K562 (cell line): ENCODE measurements at regions of chr1 and their contacts with region 1.

Region 1: GRCh38 chr1:185317034-185317885 is at the start of gene IVNS1ABP:
- DNase-seq: peak; percentile 97 to 98 (median 98)
- ATAC-seq: peak; percentile 79
- H3K4me3 ChIP-seq: peak within 1 kb of the TSS; percentile 77
- H3K27ac ChIP-seq: peak within 1 kb of the TSS; percentile 97
- H3K4me1 ChIP-seq: peaks cover 20 to 38% of the 10 kb centered on the region in 2 experiments
- H3K27me3 ChIP-seq: no peaks in the 10 kb centered on the region
- CTCF ChIP-seq: peak; percentile 24 to 62 (median 42); a peak in 5 of 6 replicates
- EP300 ChIP-seq: peak; percentile 45
- POLR2A ChIP-seq: peak; percentile 97
- RAD21 ChIP-seq: peak; percentile 47 to 58
- polyA plus RNA-seq, gene IVNS1ABP: 30.6 to 77.7 TPM

Region 2: DNA sequence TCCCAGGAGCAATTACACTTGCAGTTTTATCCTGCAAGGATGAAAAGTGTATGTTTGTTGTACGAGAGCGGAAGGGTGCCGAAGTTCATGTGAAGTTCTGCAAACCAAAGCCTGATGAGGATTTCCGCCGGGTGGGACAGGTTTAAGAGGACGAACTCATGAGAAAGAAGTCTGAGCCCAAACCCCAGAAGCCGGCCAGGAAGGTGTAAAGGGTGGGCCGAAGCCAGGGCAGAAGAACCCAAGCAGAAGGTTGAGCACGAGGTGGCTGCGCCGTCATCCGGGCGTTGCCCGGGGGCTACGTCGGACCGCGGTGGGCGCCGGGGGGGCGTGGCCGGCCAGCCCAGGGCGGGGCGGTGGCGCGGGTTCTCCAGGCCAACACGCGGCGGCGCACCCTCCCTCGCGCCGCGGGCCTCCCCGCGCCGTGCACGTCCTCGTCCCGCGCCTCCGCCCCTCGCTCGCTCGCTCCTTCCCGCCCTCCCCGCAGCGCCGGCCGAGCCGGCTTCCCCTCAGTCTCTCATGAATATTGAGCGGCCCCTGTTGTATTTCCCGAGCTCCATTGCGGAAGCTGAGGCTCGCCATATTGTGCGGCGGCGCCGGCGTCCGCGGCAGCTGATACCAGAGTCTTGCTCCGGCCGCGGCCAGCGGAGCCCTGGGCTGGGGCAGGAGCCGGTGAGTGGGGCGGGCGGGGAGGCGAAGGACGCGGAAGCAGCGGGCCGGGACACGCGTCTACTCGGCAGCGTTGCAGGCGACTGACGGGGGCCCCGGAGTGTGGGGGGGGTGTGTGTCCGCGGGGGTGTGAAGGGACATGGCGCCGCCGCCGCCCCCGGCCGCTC is 272.1 kb before region 1 on chr1 and contains the start of gene RNF2:
- CTCF ChIA-PET with region 1: no interaction called
- POLR2A ChIA-PET with region 1: no interaction called
- in situ Hi-C with region 1: no loop called
- intact Hi-C with region 1: loop called (anchors 10 kb)
- DNase-seq: peak; percentile 92 to 94 (median 94)
- ATAC-seq: peak; percentile 94
- H3K4me3 ChIP-seq: peak within 1 kb of the TSS; percentile 85
- H3K27ac ChIP-seq: peak within 1 kb of the TSS; percentile 85
- H3K4me1 ChIP-seq: peaks cover 21 to 25% of the 10 kb centered on the region in 2 experiments
- H3K27me3 ChIP-seq: no peaks in the 10 kb centered on the region
- CTCF ChIP-seq: peak in 1 of 3 experiments; percentile 40; a peak in 1 of 6 replicates
- EP300 ChIP-seq: no peak
- POLR2A ChIP-seq: peak; percentile 79
- RAD21 ChIP-seq: peak in 1 of 2 experiments; percentile 45; a peak in 3 of 4 replicates
- polyA plus RNA-seq, gene RNF2: 7.1 to 7.9 TPM

Region 3: DNA sequence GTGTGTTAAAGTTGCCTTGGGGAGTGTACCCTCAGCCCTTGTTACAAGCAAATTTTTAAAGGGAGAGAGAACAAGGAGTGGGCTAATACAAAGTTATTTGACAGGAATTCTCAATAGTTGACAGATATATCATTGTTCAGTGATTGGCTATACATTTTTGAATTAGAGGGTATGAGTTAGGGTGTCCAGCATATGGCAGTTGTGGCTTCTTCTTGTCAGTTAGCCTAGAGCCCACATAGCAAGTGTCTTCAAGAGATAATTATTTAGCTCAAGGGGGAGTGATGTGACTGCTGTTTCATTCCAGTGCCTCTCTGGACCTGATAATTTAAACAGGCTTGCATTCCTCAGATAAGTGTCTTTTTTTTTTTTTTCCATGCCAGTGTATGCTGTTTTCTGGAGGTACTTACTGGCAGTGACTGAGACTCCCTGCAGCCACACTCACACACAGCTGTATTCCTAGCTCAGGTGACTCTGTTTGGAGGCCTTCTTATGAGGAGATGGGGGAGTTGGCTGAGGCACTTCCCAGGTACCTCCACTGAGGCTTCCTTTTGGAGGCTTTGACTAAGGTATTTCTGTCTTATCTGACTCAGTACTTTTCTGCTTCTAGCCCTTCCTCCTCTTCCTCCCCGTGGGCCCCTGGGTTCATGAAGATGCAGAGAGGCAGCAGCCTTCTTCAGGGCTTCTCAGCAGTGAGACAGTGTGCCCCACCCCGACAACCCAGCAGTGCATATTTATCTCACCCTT is 32.6 kb before region 1 on chr1:
- CTCF ChIA-PET with region 1: no interaction called
- POLR2A ChIA-PET with region 1: interaction called, 3 read pairs
- in situ Hi-C with region 1: no loop called
- intact Hi-C with region 1: loop called (anchors 2 kb)
- DNase-seq: peak; percentile 47 to 95 (median 65)
- ATAC-seq: peak; percentile 91
- H3K4me3 ChIP-seq: no peak overlapping the region
- H3K27ac ChIP-seq: peak overlapping the region; percentile 96
- H3K4me1 ChIP-seq: peaks cover 4 to 40% of the 10 kb centered on the region in 2 experiments; a peak in 3 of 5 replicates
- H3K27me3 ChIP-seq: no peaks in the 10 kb centered on the region
- CTCF ChIP-seq: no peak; a peak in 2 of 6 replicates
- EP300 ChIP-seq: peak; percentile 98
- POLR2A ChIP-seq: no peak
- RAD21 ChIP-seq: peak in 1 of 2 experiments; percentile 6; a peak in 2 of 4 replicates

Region 4: DNA sequence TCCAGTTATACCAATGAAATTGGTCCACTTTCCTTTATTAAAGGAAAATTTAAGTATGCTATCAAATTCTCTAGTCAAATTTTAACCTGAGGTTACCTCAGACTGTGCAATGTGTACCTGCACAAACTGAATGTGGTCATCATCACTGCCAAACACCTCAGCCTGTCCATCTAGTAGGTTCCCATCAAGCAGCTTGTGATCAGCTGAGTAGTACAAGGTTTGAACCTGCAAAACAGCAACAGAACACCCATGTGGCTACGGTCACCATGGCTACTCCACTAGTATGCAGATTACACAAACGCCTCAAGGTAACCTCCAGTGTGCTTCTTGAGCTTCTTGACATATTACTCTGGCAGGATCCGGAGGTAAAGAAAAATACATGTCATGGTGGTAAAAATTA is 11.8 kb before region 1 on chr1:
- CTCF ChIA-PET with region 1: no interaction called
- POLR2A ChIA-PET with region 1: interaction called, 30 read pairs
- in situ Hi-C with region 1: no loop called
- intact Hi-C with region 1: no loop called
- DNase-seq: no peak
- ATAC-seq: no peak; the same call in 2 of the 3 replicates
- H3K4me3 ChIP-seq: no peak overlapping the region
- H3K27ac ChIP-seq: no peak overlapping the region
- H3K4me1 ChIP-seq: no peaks in the 10 kb centered on the region
- H3K27me3 ChIP-seq: no peaks in the 10 kb centered on the region
- CTCF ChIP-seq: no peak
- EP300 ChIP-seq: no peak
- POLR2A ChIP-seq: 0 out of 2 replicates have a peak, but pooled peaks have one; percentile 23
- RAD21 ChIP-seq: no peak

Region 5: DNA sequence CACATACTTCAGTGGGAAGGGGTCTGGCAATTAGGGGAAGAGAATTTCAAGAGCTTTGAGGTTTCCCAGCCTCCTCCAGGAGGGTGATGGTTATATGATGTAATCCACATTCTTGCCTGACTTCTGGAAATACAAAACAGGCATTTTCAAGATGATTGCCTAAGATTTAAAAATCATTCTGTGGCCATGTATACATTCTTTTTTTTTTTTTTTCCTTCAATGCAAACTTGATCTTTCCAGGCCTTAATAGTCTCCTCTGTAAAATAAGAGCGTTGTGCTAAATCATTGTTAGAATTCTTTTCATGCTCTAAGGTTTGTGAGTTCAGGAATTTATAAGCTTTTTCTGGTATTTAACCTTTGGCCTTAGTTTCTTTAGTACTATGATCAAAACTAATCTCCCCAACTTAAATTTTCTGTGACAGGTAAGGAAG is 224.6 kb after region 1 on chr1:
- CTCF ChIA-PET with region 1: no interaction called
- POLR2A ChIA-PET with region 1: interaction called, 4 read pairs
- in situ Hi-C with region 1: no loop called
- intact Hi-C with region 1: loop called (anchors 5 kb)
- DNase-seq: no peak
- ATAC-seq: no peak
- H3K4me3 ChIP-seq: no peak overlapping the region
- H3K27ac ChIP-seq: no peak overlapping the region
- H3K4me1 ChIP-seq: no peaks in the 10 kb centered on the region; a peak in 1 of 5 replicates
- H3K27me3 ChIP-seq: no peaks in the 10 kb centered on the region
- CTCF ChIP-seq: no peak
- EP300 ChIP-seq: no peak
- POLR2A ChIP-seq: no peak
- RAD21 ChIP-seq: no peak

Region 6: DNA sequence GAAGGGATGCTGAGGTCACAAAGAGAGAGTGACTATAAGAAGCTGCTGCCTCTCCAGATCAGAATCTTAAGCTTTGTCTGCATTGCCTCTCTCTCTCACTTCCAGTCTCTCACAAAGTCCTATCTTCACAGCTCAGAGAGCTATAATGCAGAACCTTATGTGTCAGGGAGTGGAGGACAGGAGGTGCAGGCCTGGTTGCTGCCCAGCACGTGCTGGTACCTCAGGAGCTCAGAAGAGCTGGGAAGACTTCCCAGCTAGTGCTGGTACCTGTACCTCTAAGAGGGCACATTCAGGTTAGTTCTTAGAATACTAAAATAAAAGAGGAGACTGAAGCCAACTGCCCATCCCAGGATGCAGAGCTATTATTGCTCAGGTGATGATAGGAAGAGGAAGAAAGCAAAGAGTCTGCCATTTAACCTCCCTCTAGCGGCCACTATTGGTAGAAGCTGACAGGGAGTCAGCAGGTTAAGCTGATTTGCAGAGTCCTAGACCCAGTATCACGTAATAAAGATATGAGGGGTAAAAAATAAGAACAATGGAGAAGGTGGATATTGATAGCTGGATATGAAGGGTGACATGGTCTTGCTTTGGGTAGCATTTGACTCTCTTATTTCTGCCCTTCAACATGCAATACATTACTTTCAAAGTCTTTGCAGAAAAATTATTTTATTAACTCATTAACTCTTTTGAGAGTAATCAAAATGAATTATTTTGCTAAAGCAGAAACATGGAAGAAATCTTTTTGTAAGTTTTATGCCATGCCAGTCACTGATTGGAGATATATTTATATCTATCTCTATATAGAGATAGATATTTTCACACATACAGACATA is 278.8 kb after region 1 on chr1:
- CTCF ChIA-PET with region 1: no interaction called
- POLR2A ChIA-PET with region 1: interaction called, 3 read pairs
- in situ Hi-C with region 1: no loop called
- intact Hi-C with region 1: loop called (anchors 2 kb)
- DNase-seq: peak; percentile 67 to 73 (median 68)
- ATAC-seq: peak; percentile 98
- H3K4me3 ChIP-seq: no peak overlapping the region
- H3K27ac ChIP-seq: no peak overlapping the region
- H3K4me1 ChIP-seq: no peaks in the 10 kb centered on the region
- H3K27me3 ChIP-seq: no peaks in the 10 kb centered on the region
- CTCF ChIP-seq: peak; percentile 67 to 84 (median 70)
- EP300 ChIP-seq: no peak
- POLR2A ChIP-seq: no peak
- RAD21 ChIP-seq: peak; percentile 52 to 74

Region 7: GRCh38 chr1:186112280-186112679 is 795.0 kb after region 1 on chr1:
- CTCF ChIA-PET with region 1: no interaction called
- POLR2A ChIA-PET with region 1: no interaction called
- in situ Hi-C with region 1: no loop called
- intact Hi-C with region 1: loop called (anchors 10 kb)
- DNase-seq: peak; percentile 87 to 96 (median 90)
- ATAC-seq: peak; percentile 100
- H3K4me3 ChIP-seq: no peak overlapping the region
- H3K27ac ChIP-seq: peak overlapping the region; percentile 44; the same call in 2 of the 3 replicates
- H3K4me1 ChIP-seq: peaks cover 0 to 10% of the 10 kb centered on the region in 2 experiments; a peak in 2 of 5 replicates
- H3K27me3 ChIP-seq: no peaks in the 10 kb centered on the region
- CTCF ChIP-seq: no peak
- EP300 ChIP-seq: peak; percentile 98
- POLR2A ChIP-seq: no peak
- RAD21 ChIP-seq: 0 out of 4 replicates have a peak, but pooled peaks of 1 of the 2 experiments have one; percentile 7